OCI-LY7 (cell line): ENCODE measurements at regions of chr1 and their contacts with region 1.

Region 1: DNA sequence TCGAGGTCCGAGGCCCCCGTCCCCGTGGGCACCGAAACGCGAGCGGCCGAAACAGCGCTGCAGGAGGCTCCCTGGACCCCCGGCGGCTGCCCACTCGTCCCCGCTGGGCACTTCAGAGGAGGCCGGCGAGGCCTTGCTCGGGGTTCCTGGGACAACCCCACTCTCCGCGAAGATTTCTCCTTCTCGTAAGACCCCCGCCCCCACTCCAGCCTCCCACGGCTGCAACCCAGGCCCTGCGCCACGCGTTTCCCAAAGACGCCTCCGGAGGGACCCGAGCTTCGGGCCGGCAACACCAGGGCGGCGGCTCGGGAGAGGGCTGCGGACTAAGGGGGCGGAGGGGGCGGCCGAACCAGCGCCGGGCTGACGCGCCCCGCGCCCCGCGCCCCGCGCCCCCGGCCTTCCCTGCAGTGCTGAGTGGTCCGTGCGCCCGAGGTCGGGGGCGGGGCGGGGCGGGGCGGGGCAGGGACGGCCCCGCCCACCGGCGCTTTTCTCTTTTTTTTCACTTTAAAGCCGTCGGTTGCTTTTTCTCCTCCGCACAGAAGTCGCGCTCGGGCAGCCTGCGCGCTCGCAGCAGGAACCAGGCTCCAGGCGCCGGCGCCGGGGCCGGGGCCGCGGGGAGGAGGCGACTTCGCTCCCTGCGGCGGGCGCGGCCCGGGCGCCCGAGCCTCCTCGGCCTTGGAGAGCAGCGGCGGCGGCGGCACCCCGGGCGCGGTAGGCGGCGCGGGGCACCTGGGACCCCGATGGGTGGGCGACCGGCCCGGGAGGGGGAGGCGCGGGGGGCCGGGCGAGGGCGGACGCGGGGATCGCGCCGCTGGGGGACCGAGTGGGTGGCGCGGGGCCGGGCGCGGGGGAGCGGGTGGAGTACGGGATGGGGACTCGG is at the start of gene SPSB1:
- DNase-seq: peak; percentile 91
- H3K4me3 ChIP-seq: peak within 1 kb of the TSS; percentile 78
- H3K27ac ChIP-seq: no peak within 1 kb of the TSS
- H3K4me1 ChIP-seq: peaks cover 31% of the 10 kb centered on the region
- CTCF ChIP-seq: peak; percentile 34; the same call in 1 of the 2 replicates
- total RNA-seq, gene SPSB1: 14.0 and 17.9 TPM in 2 replicates

Region 2: DNA sequence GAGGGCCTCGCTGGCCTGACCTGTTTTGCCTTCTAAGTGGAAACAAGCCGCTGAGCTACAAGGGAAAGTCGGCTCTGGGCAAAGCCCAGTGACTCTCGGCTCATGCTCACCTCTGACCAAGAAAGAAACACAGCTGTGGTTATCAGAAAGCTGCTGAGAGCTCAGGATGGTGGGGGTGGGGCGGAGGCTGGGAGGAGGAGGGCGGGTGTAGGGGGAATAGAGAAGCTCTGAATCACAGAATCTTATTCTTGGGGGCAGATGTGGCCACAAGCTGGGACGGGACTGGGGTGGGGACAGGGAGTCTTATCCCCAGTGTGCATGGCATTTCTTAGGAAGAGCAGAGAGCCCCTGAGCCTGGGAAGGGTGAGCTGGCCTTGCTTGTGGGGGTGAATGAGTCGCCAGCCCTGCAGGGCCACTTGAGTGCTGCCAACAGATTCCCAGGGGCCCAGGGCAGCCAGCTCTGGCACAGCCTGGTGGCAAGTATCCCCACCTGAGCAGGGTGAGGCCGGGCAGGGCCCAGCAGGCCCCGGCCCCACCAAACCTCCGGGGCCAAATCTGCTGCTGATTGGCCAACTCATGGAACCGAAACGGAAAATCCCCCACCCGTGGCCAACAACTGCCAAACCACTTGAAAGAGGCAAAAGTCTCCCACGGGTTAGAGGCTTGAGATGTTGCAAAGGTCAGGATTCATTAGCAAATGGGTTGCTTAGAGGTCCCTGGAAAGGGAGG is 120.7 kb after region 1 on chr1:
- CTCF ChIA-PET with region 1: interaction called, 4 read pairs
- POLR2A ChIA-PET with region 1: no interaction called
- intact Hi-C with region 1: loop called (anchors 5 kb)
- DNase-seq: peak; percentile 90
- H3K4me3 ChIP-seq: peak overlapping the region; percentile 57
- H3K27ac ChIP-seq: peak overlapping the region; percentile 91
- H3K4me1 ChIP-seq: peaks cover 80% of the 10 kb centered on the region
- CTCF ChIP-seq: no peak

Region 3: GRCh38 chr1:9428601-9429341 is 136.2 kb after region 1 on chr1:
- CTCF ChIA-PET with region 1: no interaction called
- POLR2A ChIA-PET with region 1: interaction called, 3 read pairs
- intact Hi-C with region 1: loop called (anchors 2 kb)
- DNase-seq: peak; percentile 100
- H3K4me3 ChIP-seq: peak overlapping the region; percentile 69
- H3K27ac ChIP-seq: peak overlapping the region; percentile 95
- H3K4me1 ChIP-seq: peaks cover 69% of the 10 kb centered on the region
- CTCF ChIP-seq: peak; percentile 58; the same call in 1 of the 2 replicates

Region 4: DNA sequence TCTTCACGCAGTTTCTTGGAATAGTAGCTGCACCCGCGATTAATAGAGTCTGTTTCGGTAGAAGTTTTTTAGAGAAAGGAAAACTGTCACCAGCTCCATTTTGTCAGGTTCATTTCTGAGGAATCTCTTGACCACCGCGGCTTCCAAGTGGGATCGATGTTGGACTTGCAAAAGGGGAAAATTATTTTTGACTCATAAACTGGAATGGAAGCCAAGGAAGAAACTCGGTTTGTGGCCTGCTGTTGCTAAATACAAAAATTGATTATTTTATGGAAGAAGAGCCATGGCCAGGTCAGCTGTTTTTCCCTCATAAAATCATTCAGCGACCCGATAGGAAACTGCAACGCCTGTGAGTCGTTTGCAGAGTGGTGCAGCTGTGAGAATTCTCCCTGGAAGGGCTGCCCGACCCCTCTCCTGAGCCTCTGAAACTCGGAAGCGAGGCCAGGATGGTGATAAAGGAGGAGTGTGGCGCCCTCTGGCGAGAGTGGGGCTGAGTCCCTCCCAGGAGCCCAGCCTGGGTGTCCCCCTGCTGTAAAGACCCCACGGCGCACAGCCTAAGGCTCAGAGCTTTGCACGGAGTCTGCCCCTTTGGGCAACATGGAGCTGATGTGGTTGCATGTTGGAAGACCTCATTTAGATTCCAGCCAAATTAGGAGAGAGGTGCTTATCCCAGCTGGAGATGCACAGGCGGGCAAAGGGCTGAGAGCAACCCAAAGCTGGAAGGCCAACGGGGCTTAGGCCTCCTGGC is 163.1 kb after region 1 on chr1:
- CTCF ChIA-PET with region 1: no interaction called
- POLR2A ChIA-PET with region 1: interaction called, 5 read pairs
- intact Hi-C with region 1: loop called (anchors 1 kb)
- DNase-seq: peak; percentile 81
- H3K4me3 ChIP-seq: no peak overlapping the region
- H3K27ac ChIP-seq: no peak overlapping the region
- H3K4me1 ChIP-seq: peaks cover 27% of the 10 kb centered on the region
- CTCF ChIP-seq: peak; percentile 97

Region 5: GRCh38 chr1:9494929-9495758 is 202.5 kb after region 1 on chr1:
- CTCF ChIA-PET with region 1: interaction called, 3 read pairs
- POLR2A ChIA-PET with region 1: interaction called, 3 read pairs
- intact Hi-C with region 1: loop called (anchors 1 kb)
- DNase-seq: peak; percentile 82
- H3K4me3 ChIP-seq: peak overlapping the region; percentile 62
- H3K27ac ChIP-seq: no peak overlapping the region
- H3K4me1 ChIP-seq: peaks cover 9% of the 10 kb centered on the region
- CTCF ChIP-seq: peak; percentile 95

Region 6: GRCh38 chr1:9573723-9574122 is 281.1 kb after region 1 on chr1:
- CTCF ChIA-PET with region 1: no interaction called
- POLR2A ChIA-PET with region 1: no interaction called
- intact Hi-C with region 1: loop called (anchors 5 kb)
- DNase-seq: peak; percentile 55
- H3K4me3 ChIP-seq: no peak overlapping the region
- H3K27ac ChIP-seq: no peak overlapping the region
- H3K4me1 ChIP-seq: peaks cover 17% of the 10 kb centered on the region
- CTCF ChIP-seq: peak; percentile 75

Region 7: DNA sequence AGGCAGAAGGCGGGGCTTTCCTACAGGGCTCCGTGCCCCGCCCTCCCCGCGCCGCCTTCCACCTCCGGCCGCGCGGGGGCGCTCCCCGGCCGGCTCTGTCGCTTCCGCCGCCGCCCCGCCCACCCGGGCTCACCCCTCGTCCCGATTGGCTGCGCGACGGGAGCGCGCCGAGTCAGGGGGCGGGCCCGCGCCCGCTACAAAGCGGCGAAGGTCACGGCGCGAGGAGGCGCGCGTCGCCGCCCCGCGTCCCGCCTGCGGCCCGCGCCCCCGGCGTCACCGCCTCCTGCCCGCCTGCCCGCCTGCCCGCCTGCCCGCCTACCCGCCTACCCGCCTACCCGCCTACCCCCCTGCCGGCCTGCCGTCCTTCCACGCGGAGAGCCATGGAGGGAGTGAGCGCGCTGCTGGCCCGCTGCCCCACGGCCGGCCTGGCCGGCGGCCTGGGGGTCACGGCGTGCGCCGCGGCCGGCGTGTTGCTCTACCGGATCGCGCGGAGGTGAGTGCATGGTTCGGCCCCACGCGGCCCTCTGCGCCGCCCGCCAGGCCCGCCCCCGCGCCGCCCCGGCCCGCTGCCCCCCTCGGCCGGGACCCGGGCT is 296.0 kb after region 1 on chr1 and contains the start of gene TMEM201:
- CTCF ChIA-PET with region 1: no interaction called
- POLR2A ChIA-PET with region 1: no interaction called
- intact Hi-C with region 1: loop called (anchors 5 kb)
- DNase-seq: peak; percentile 95
- H3K4me3 ChIP-seq: peak within 1 kb of the TSS; percentile 90
- H3K27ac ChIP-seq: no peak within 1 kb of the TSS
- H3K4me1 ChIP-seq: peaks cover 40% of the 10 kb centered on the region
- CTCF ChIP-seq: peak; percentile 79
- total RNA-seq, gene TMEM201: 5.3 and 7.5 TPM in 2 replicates